ENCODE measurements at regions of chr4 and their contacts with region 1.

Region 1: DNA sequence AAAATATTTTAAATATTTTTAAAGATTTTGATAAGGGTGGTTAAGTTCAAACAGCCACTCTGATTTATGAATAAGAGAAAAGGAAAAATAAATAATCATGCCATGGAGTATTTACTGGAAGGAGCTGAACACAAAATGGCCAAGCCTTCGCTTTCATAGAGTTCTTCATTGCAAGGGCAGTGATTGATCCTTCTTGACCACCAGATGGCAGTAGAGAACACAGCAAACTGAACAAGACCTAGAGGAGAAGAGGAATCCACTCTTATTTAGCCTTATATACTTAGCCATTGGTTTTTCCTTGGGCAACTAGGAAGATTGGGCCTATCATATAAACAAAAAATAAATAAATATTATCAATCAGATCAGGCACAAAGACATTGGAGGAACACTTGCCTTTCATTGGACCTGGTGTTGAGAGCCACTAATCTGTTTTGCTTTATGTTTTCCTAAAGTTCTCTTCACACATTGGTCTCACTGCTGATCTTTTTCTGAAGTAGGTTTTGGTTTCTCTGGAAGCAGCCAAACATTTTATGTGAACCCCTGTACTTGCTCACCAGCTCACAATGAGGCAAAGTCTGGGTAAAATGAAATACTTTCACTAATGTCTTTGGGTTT is 58.1 kb upstream of the PARM1 start:
- DNase-seq: peak; percentile 32
- H3K4me3 Mint-ChIP-seq: no peak overlapping the region
- H3K27ac Mint-ChIP-seq: no peak overlapping the region
- H3K4me1 Mint-ChIP-seq: no peaks in the 10 kb centered on the region
- H3K27me3 Mint-ChIP-seq: peaks cover under 1% of the 10 kb centered on the region
- CTCF ChIP-seq: peak; percentile 48

Region 2: GRCh38 chr4:74790652-74791443 is 84.0 kb before region 1 on chr4:
- CTCF ChIA-PET with region 1: no interaction called
- intact Hi-C with region 1: no loop called
- DNase-seq: no peak
- H3K4me3 Mint-ChIP-seq: no peak overlapping the region
- H3K27ac Mint-ChIP-seq: no peak overlapping the region
- H3K4me1 Mint-ChIP-seq: peaks cover 14% of the 10 kb centered on the region
- H3K27me3 Mint-ChIP-seq: no peaks in the 10 kb centered on the region
- CTCF ChIP-seq: no peak

Region 3: GRCh38 chr4:74838746-74839370 is 36.0 kb before region 1 on chr4:
- CTCF ChIA-PET with region 1: no interaction called
- intact Hi-C with region 1: no loop called
- DNase-seq: no peak
- H3K4me3 Mint-ChIP-seq: no peak overlapping the region
- H3K27ac Mint-ChIP-seq: no peak overlapping the region
- H3K4me1 Mint-ChIP-seq: no peaks in the 10 kb centered on the region
- H3K27me3 Mint-ChIP-seq: peaks cover 28% of the 10 kb centered on the region
- CTCF ChIP-seq: no peak

Region 4: GRCh38 chr4:75099321-75099720 is 224.5 kb after region 1 on chr4:
- CTCF ChIA-PET with region 1: no interaction called
- intact Hi-C with region 1: no loop called
- DNase-seq: no peak
- H3K4me3 Mint-ChIP-seq: no peak overlapping the region
- H3K27ac Mint-ChIP-seq: no peak overlapping the region
- H3K4me1 Mint-ChIP-seq: no peaks in the 10 kb centered on the region
- H3K27me3 Mint-ChIP-seq: no peaks in the 10 kb centered on the region
- CTCF ChIP-seq: no peak

Region 5: DNA sequence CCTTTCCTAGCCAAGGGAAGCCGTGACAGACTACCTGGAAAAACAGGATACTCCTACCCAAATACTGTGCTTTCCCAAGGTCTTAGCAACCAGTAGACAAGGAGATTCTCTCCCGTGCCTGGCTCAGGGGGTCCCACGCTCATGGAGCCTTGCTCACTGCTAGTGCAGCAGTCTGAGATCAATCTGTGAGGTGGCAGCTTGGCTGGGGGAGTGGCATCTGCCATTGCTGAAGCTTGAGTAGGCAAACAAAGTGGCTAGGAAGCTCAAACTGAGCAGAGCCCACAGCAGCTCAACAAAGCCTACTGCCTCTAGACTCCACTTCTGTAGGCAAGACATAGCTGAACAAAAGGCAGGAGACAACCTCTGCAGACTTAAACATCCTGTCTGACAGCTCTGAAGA is 235.2 kb after region 1 on chr4:
- CTCF ChIA-PET with region 1: no interaction called
- intact Hi-C with region 1: loop called (anchors 10 kb)
- DNase-seq: no peak
- H3K4me3 Mint-ChIP-seq: no peak overlapping the region
- H3K27ac Mint-ChIP-seq: no peak overlapping the region
- H3K4me1 Mint-ChIP-seq: no peaks in the 10 kb centered on the region
- H3K27me3 Mint-ChIP-seq: no peaks in the 10 kb centered on the region
- CTCF ChIP-seq: no peak

Region 6: DNA sequence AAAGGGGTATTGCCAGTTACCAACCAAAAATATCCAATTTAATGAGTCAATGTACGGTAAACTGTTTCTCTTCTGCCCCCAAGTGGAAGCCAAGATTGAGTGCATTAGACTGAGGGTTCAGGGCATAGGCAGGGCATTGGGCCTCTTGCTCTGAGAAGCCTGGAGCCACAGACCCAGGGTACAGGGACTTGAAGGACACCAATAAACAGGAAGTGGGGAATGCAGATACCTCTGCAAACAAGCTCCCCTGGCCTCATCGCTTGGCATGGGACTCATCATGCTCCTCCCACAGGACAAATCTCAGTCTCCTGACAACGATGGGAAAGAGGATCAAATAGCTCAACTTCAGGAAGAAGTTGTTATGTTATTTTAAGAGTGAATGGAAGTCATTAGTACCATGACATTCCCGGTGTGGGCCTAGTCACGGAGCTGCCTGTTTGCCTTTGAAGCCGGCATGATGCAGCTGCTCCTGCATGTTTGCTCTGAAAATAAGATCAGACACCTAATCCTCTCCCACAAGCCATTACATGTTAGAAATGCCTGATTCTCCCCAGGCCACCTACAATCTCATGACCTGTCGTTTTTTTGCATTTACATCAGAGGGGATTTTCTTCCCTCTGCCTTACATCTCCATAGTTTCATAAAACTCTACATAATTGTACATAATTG is 415.2 kb after region 1 on chr4:
- CTCF ChIA-PET with region 1: interaction called, 3 read pairs
- intact Hi-C with region 1: loop called (anchors 2 kb)
- DNase-seq: peak; percentile 17
- H3K4me3 Mint-ChIP-seq: no peak overlapping the region
- H3K27ac Mint-ChIP-seq: no peak overlapping the region
- H3K4me1 Mint-ChIP-seq: no peaks in the 10 kb centered on the region
- H3K27me3 Mint-ChIP-seq: peaks cover 13% of the 10 kb centered on the region
- CTCF ChIP-seq: no peak